ENCODE measurements at regions of chr1 and their contacts with region 1.

Region 1: GRCh38 chr1:94792473-94793295 is 27.5 kb upstream of the SLC44A3 start:
- DNase-seq: no peak
- ATAC-seq: peak; percentile 52 to 77 (median 67)
- H3K4me3 ChIP-seq: peak overlapping the region in 1 of 12 donors; percentile 11
- H3K27ac ChIP-seq: peak overlapping the region; percentile 5 to 80 (median 66)
- H3K4me1 ChIP-seq: peaks cover 0 to 46% (median 18%) of the 10 kb centered on the region in 12 donors
- H3K27me3 ChIP-seq: no peaks in the 10 kb centered on the region
- CTCF ChIP-seq: peak in 8 of 12 donors; percentile 8 to 45 (median 24)
- POLR2A ChIP-seq: no peak

Region 2: DNA sequence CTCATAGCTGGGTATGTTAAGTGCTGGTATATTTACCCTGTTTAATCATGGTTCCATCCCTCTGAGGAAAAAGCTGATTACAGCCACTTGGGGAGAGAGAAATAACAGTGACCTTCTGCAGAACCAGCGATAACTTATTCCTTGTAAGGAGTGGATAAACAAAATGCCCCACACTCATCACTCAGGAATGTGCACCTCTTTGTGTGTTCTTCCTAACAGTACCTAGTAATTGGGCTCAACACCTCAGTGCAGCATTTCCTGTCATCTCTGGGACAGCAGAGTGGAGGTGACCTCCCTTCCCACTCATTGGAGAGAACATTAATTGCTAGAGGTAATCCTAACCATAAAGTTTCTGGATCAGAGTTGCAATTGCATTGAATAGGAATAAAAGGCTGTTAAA is 138.7 kb before region 1 on chr1:
- intact Hi-C with region 1: loop called in 3 of 10 experiments (anchors 2 to 10 kb)
- DNase-seq: no peak
- ATAC-seq: peak in 3 of 4 donors; percentile 18 to 45 (median 43)
- H3K4me3 ChIP-seq: no peak overlapping the region
- H3K27ac ChIP-seq: peak overlapping the region in 8 of 12 donors; percentile 21 to 81 (median 62)
- H3K4me1 ChIP-seq: peaks cover 0 to 32% (median 11%) of the 10 kb centered on the region in 12 donors
- H3K27me3 ChIP-seq: no peaks in the 10 kb centered on the region
- CTCF ChIP-seq: no peak
- POLR2A ChIP-seq: no peak

Region 3: GRCh38 chr1:94660994-94661393 is 131.7 kb before region 1 on chr1:
- intact Hi-C with region 1: loop called in 4 of 10 experiments (anchors 2 to 10 kb)
- DNase-seq: no peak
- ATAC-seq: no peak
- H3K4me3 ChIP-seq: no peak overlapping the region
- H3K27ac ChIP-seq: peak overlapping the region in 1 of 12 donors; percentile 3
- H3K4me1 ChIP-seq: peaks cover 0 to 33% (median 6%) of the 10 kb centered on the region in 12 donors
- H3K27me3 ChIP-seq: no peaks in the 10 kb centered on the region
- CTCF ChIP-seq: no peak
- POLR2A ChIP-seq: no peak

Region 4: GRCh38 chr1:94672934-94673333 is 119.8 kb before region 1 on chr1:
- intact Hi-C with region 1: loop called in 2 of 10 experiments (anchors 10 kb)
- DNase-seq: no peak
- ATAC-seq: no peak
- H3K4me3 ChIP-seq: no peak overlapping the region
- H3K27ac ChIP-seq: no peak overlapping the region
- H3K4me1 ChIP-seq: no peaks in the 10 kb centered on the region
- H3K27me3 ChIP-seq: no peaks in the 10 kb centered on the region
- CTCF ChIP-seq: no peak
- POLR2A ChIP-seq: no peak

Region 5: DNA sequence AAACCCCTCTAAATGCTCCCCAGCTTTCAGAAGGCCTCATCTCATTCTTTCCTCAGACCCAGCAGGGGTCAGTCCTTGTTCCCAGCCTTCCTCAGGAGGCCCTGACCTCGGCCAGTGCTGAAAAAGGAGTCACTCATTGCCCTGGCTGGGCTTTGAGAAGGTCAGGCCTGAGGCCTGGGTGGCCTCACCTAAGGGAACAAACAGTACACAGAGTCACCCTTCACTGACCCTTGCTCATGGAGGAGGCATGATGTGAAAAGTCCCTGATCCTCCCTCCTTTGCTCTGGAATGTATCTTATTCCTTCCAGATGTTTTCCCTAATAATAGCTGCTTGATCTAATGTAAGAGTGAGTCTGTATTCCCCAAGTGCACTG is 90.3 kb before region 1 on chr1:
- intact Hi-C with region 1: loop called in 1 of 10 experiments (anchors 10 kb)
- DNase-seq: peak in 1 of 5 donors; percentile 47
- ATAC-seq: peak; percentile 42 to 80 (median 54)
- H3K4me3 ChIP-seq: no peak overlapping the region
- H3K27ac ChIP-seq: peak overlapping the region in 4 of 12 donors; percentile 3 to 36 (median 22)
- H3K4me1 ChIP-seq: peaks cover 0 to 13% (median 0%) of the 10 kb centered on the region in 12 donors
- H3K27me3 ChIP-seq: no peaks in the 10 kb centered on the region
- CTCF ChIP-seq: no peak
- POLR2A ChIP-seq: no peak

Region 6: GRCh38 chr1:94755675-94756074 is 37.0 kb before region 1 on chr1:
- intact Hi-C with region 1: loop called in 5 of 10 experiments (anchors 2 to 5 kb)
- DNase-seq: peak in 3 of 5 donors; percentile 20 to 37 (median 24)
- ATAC-seq: peak; percentile 25 to 46 (median 40)
- H3K4me3 ChIP-seq: no peak overlapping the region
- H3K27ac ChIP-seq: peak overlapping the region in 4 of 12 donors; percentile 9 to 69 (median 38)
- H3K4me1 ChIP-seq: peaks cover 7 to 53% (median 28%) of the 10 kb centered on the region in 12 donors
- H3K27me3 ChIP-seq: no peaks in the 10 kb centered on the region
- CTCF ChIP-seq: no peak
- POLR2A ChIP-seq: no peak